Natural killer cell (primary cell): ENCODE measurements at regions of chr17 and their contacts with region 1.

Region 1: DNA sequence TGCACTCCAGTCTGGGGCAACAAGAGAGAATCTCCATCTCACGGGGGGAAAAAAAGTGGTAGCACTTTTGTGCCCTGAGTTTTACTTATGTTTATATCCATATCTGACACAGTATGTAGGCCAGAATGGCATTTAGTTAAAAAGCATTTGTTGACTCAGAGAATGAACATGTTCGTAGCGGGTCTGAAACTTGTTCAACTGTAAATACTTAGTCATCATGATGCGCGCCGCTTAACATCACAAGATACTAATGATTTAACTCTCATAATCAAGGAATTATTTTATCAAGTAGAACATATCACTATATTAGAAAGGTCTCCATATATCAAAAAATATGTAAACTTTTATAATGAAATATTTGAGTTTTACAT is 55.3 kb upstream of the ITGA2B start:
- DNase-seq: no peak
- ATAC-seq: no peak
- H3K4me3 ChIP-seq: no peak overlapping the region
- H3K4me3 Mint-ChIP-seq: no peak overlapping the region
- H3K27ac ChIP-seq: no peak overlapping the region
- H3K27ac Mint-ChIP-seq: peak overlapping the region; percentile 66 to 82
- H3K4me1 ChIP-seq: peaks cover 22% of the 10 kb centered on the region
- H3K4me1 Mint-ChIP-seq: peaks cover 32 to 45% of the 10 kb centered on the region in 2 donors
- H3K27me3 ChIP-seq: no peaks in the 10 kb centered on the region
- H3K27me3 Mint-ChIP-seq: no peaks in the 10 kb centered on the region
- CTCF ChIP-seq: no peak

Region 2: GRCh38 chr17:44258811-44259351 is 185.8 kb before region 1 on chr17:
- intact Hi-C with region 1: no loop called
- DNase-seq: no peak
- ATAC-seq: no peak
- H3K4me3 ChIP-seq: no peak overlapping the region
- H3K4me3 Mint-ChIP-seq: no peak overlapping the region
- H3K27ac ChIP-seq: no peak overlapping the region
- H3K27ac Mint-ChIP-seq: no peak overlapping the region
- H3K4me1 ChIP-seq: no peaks in the 10 kb centered on the region
- H3K4me1 Mint-ChIP-seq: no peaks in the 10 kb centered on the region
- H3K27me3 ChIP-seq: no peaks in the 10 kb centered on the region
- H3K27me3 Mint-ChIP-seq: no peaks in the 10 kb centered on the region
- CTCF ChIP-seq: no peak

Region 3: GRCh38 chr17:44432254-44433157 is 12.2 kb before region 1 on chr17:
- intact Hi-C with region 1: loop called (anchors 2 kb)
- DNase-seq: no peak
- ATAC-seq: no peak
- H3K4me3 ChIP-seq: no peak overlapping the region
- H3K4me3 Mint-ChIP-seq: no peak overlapping the region
- H3K27ac ChIP-seq: no peak overlapping the region
- H3K27ac Mint-ChIP-seq: peak overlapping the region; percentile 33 to 35
- H3K4me1 ChIP-seq: no peaks in the 10 kb centered on the region
- H3K4me1 Mint-ChIP-seq: peaks cover 23 to 36% of the 10 kb centered on the region in 2 donors
- H3K27me3 ChIP-seq: no peaks in the 10 kb centered on the region
- H3K27me3 Mint-ChIP-seq: no peaks in the 10 kb centered on the region
- CTCF ChIP-seq: no peak

Region 4: GRCh38 chr17:44533533-44534246 is 89.0 kb after region 1 on chr17:
- intact Hi-C with region 1: no loop called
- DNase-seq: peak; percentile 82 to 91
- ATAC-seq: peak; percentile 83 to 97 (median 95)
- H3K4me3 ChIP-seq: no peak overlapping the region
- H3K4me3 Mint-ChIP-seq: no peak overlapping the region
- H3K27ac ChIP-seq: no peak overlapping the region
- H3K27ac Mint-ChIP-seq: no peak overlapping the region
- H3K4me1 ChIP-seq: peaks cover 8% of the 10 kb centered on the region
- H3K4me1 Mint-ChIP-seq: peaks cover 8 to 10% of the 10 kb centered on the region in 2 donors
- H3K27me3 ChIP-seq: no peaks in the 10 kb centered on the region
- H3K27me3 Mint-ChIP-seq: peaks cover 6% of the 10 kb centered on the region in 2 donors
- CTCF ChIP-seq: peak; percentile 94